B cell (primary cell): ENCODE measurements at regions of chr6 and their contacts with region 1.

Region 1: GRCh38 chr6:151675746-151676416 is 131.6 kb upstream of the ESR1 start:
- DNase-seq: peak; percentile 71
- ATAC-seq: peak; percentile 92
- H3K4me3 ChIP-seq: no peak overlapping the region
- H3K4me3 Mint-ChIP-seq: no peak overlapping the region
- H3K27ac ChIP-seq: no peak overlapping the region
- H3K27ac Mint-ChIP-seq: no peak overlapping the region
- H3K4me1 ChIP-seq: no peaks in the 10 kb centered on the region
- H3K4me1 Mint-ChIP-seq: peaks cover 3% of the 10 kb centered on the region
- H3K27me3 ChIP-seq: no peaks in the 10 kb centered on the region
- H3K27me3 Mint-ChIP-seq: no peaks in the 10 kb centered on the region
- CTCF ChIP-seq: peak; percentile 96

Region 2: GRCh38 chr6:151690768-151691562 is 15.1 kb after region 1 on chr6:
- CTCF ChIA-PET with region 1: interaction called, 17 read pairs
- POLR2A ChIA-PET with region 1: interaction called, 4 read pairs
- intact Hi-C with region 1: no loop called
- DNase-seq: peak; percentile 82
- ATAC-seq: peak; percentile 84
- H3K4me3 ChIP-seq: peak overlapping the region in 4 of 5 experiments; percentile 15 to 64 (median 41)
- H3K4me3 Mint-ChIP-seq: peak overlapping the region; percentile 75
- H3K27ac ChIP-seq: peak overlapping the region; percentile 65 to 76
- H3K27ac Mint-ChIP-seq: peak overlapping the region; percentile 91
- H3K4me1 ChIP-seq: peaks cover 19 to 20% of the 10 kb centered on the region in 2 donors
- H3K4me1 Mint-ChIP-seq: peaks cover 23% of the 10 kb centered on the region
- H3K27me3 ChIP-seq: no peaks in the 10 kb centered on the region
- H3K27me3 Mint-ChIP-seq: no peaks in the 10 kb centered on the region
- CTCF ChIP-seq: no peak

Region 3: DNA sequence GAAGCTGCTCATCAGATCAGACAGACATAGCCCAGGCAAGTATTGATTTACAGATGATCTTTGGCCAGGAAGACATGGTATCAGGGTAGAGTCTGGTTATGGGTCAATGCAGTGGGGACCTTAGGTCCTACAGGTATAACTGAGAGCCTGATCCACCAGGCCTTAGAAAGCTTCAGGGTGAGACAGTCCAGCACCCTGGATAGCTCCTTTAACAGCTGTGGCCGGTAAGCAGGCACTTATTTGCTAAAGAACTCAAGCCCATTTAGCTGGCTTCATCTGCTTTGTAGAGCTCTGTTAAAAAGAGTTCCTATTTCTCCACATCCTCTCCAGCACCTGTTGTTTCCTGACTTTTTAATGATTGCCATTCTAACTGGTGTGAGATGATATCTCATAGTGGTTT is 171.2 kb after region 1 on chr6:
- CTCF ChIA-PET with region 1: no interaction called
- POLR2A ChIA-PET with region 1: no interaction called
- intact Hi-C with region 1: no loop called
- DNase-seq: no peak
- ATAC-seq: no peak
- H3K4me3 ChIP-seq: no peak overlapping the region
- H3K4me3 Mint-ChIP-seq: no peak overlapping the region
- H3K27ac ChIP-seq: no peak overlapping the region
- H3K27ac Mint-ChIP-seq: no peak overlapping the region
- H3K4me1 ChIP-seq: no peaks in the 10 kb centered on the region
- H3K4me1 Mint-ChIP-seq: no peaks in the 10 kb centered on the region
- H3K27me3 ChIP-seq: no peaks in the 10 kb centered on the region
- H3K27me3 Mint-ChIP-seq: no peaks in the 10 kb centered on the region
- CTCF ChIP-seq: no peak

Region 4: DNA sequence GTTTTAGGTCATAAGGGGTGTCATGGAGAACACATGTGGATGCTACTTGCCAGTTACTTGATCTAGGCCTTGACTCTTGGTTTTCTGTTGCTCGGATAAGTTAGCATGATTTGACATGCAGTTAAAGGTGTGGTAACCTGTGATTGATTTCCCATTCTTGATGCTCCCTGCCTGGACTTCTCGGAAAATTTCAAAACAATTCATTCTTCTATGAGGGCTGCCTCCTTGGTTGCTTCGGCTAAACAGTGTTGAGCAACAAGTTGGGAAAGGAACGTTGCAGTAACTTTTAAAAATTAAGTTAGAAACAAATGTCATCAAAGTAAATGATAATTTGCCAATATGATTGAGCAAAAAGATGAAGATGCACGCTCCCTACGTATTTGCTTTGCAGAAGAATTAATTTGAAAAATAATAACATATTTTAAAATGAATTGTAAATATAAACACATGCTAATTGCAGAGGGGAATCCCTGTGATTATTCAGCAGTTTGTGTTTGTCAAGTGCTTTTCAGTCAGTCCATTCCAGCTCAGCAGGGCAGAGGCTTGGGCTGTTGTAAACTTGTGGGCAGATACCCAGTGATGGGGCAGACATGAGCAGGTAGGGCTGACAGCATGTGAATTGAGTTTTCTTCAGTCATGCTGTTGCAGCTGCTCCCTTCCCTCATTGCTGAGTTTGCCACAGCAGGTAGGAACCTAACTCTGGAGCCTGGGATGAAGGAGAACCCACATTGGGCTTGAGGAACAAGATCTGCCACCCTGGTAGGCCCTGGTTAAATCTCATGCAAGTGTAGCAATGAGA is 241.8 kb after region 1 on chr6:
- CTCF ChIA-PET with region 1: no interaction called
- POLR2A ChIA-PET with region 1: no interaction called
- intact Hi-C with region 1: no loop called
- DNase-seq: no peak
- ATAC-seq: no peak
- H3K4me3 ChIP-seq: no peak overlapping the region
- H3K4me3 Mint-ChIP-seq: no peak overlapping the region
- H3K27ac ChIP-seq: no peak overlapping the region
- H3K27ac Mint-ChIP-seq: no peak overlapping the region
- H3K4me1 ChIP-seq: no peaks in the 10 kb centered on the region
- H3K4me1 Mint-ChIP-seq: no peaks in the 10 kb centered on the region
- H3K27me3 ChIP-seq: no peaks in the 10 kb centered on the region
- H3K27me3 Mint-ChIP-seq: no peaks in the 10 kb centered on the region
- CTCF ChIP-seq: no peak

Region 5: GRCh38 chr6:152124429-152125074 is 448.7 kb after region 1 on chr6:
- CTCF ChIA-PET with region 1: interaction called, 27 read pairs
- POLR2A ChIA-PET with region 1: no interaction called
- intact Hi-C with region 1: loop called (anchors 1 kb)
- DNase-seq: peak; percentile 59
- ATAC-seq: peak; percentile 57
- H3K4me3 ChIP-seq: no peak overlapping the region
- H3K4me3 Mint-ChIP-seq: no peak overlapping the region
- H3K27ac ChIP-seq: no peak overlapping the region
- H3K27ac Mint-ChIP-seq: no peak overlapping the region
- H3K4me1 ChIP-seq: no peaks in the 10 kb centered on the region
- H3K4me1 Mint-ChIP-seq: peaks cover 2% of the 10 kb centered on the region
- H3K27me3 ChIP-seq: no peaks in the 10 kb centered on the region
- H3K27me3 Mint-ChIP-seq: no peaks in the 10 kb centered on the region
- CTCF ChIP-seq: peak; percentile 75

Region 6: DNA sequence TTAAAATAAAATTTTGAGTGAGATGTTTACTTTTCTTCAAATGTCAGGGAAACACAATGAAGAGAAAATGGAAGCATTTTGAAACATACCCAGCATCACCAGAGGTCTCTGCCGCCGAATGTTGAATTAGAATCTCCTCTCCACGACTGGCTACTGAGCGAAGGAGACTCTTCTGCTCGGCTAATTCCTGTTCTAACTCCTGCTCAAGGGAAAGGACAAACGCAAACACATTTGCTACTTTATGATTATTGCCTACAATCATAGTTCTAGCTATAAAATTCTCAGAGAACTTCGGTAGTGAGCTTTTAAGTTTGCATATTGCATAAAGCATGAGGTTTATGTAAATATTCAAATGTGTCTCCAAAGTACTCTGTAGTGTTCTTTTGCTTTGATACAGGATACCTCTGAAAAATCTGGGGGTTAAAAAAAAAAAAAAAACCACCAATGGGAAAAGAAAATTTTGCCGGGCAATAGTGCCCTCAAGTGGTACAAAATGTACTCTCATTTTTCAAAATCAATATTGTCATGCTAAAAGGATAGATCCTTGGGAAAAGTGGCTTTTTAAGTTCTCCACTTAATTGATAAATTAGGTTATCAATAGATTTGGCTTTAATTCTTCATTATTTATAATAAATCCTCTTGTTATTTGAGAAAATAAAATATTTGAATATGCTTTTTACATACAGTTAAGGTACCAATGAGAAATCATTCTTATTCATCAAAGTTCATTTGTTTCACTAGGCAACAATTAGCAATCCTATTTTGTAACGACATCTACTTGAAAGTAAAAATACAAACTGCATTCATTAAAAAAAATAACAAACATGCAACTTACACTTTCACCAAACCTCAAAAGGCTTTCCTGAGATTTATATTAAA is 592.3 kb after region 1 on chr6:
- CTCF ChIA-PET with region 1: interaction called, 9 read pairs
- POLR2A ChIA-PET with region 1: interaction called, 3 read pairs
- intact Hi-C with region 1: loop called (anchors 1 kb)
- DNase-seq: peak; percentile 32
- ATAC-seq: no peak
- H3K4me3 ChIP-seq: no peak overlapping the region
- H3K4me3 Mint-ChIP-seq: no peak overlapping the region
- H3K27ac ChIP-seq: no peak overlapping the region
- H3K27ac Mint-ChIP-seq: no peak overlapping the region
- H3K4me1 ChIP-seq: no peaks in the 10 kb centered on the region
- H3K4me1 Mint-ChIP-seq: no peaks in the 10 kb centered on the region
- H3K27me3 ChIP-seq: no peaks in the 10 kb centered on the region
- H3K27me3 Mint-ChIP-seq: no peaks in the 10 kb centered on the region
- CTCF ChIP-seq: peak; percentile 66